Psoas muscle (tissue), 8 donors: ENCODE measurements at regions of chr5 and their contacts with region 1.

Region 1: DNA sequence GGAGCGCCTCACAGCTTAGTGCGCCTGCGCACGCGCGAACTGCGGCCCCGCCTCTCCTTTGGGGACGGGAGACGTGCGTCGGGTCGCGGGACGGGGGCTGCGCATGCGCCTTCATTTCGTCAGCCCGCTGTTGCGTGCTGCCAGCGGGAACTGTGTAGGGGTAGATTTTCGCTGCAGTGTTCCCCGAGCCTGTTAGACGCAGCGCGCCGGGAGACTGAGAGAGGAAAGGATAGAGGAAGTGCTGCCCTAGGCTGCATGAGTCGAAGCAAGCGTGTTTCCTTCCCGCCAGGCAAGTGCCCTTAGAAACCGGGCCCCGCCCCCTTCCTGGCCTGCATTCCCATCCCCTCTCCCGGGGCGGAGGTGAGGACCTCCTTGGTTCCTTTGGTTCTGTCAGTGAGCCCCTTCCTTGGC is 12.3 kb downstream of the ITGA1 start:
- DNase-seq: peak; percentile 95 to 98
- ATAC-seq: peak; percentile 94 to 96 (median 96)
- H3K4me3 ChIP-seq: peak overlapping the region; percentile 83
- H3K27ac ChIP-seq: peak overlapping the region; percentile 94
- H3K4me1 ChIP-seq: peaks cover 38% of the 10 kb centered on the region
- H3K27me3 ChIP-seq: no peaks in the 10 kb centered on the region
- CTCF ChIP-seq: no peak

Region 2: DNA sequence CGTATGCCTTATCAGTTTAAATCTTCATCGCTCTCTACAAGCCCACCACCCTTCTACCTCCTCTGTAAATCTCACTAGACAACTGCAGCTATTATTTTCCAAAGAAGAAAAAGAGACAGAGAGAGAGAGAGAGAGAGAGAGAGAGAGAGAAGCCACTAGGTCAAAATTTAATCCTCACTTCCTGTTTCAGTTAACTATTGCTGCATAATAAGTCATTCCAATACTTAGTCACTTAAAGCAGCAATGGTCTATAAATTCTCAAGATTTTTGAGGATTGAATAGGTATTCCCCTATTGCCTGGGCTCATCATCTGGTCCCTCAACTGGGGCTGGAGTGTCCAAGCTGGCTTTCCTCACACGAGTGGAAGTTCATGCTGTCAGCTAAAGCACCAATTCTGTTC is 56.6 kb after region 1 on chr5:
- intact Hi-C with region 1: loop called in 1 of 2 experiments (anchors 5 kb)
- DNase-seq: no peak
- ATAC-seq: no peak
- H3K4me3 ChIP-seq: no peak overlapping the region
- H3K27ac ChIP-seq: no peak overlapping the region
- H3K4me1 ChIP-seq: no peaks in the 10 kb centered on the region
- H3K27me3 ChIP-seq: no peaks in the 10 kb centered on the region
- CTCF ChIP-seq: no peak